ENCODE measurements at regions of chr3 and their contacts with region 1.

Region 1: GRCh38 chr3:136396916-136397315 is 146.8 kb downstream of the PCCB start:
- DNase-seq: no peak
- CTCF ChIP-seq: no peak

Region 2: GRCh38 chr3:136409549-136409948 is 12.6 kb after region 1 on chr3:
- CTCF ChIA-PET with region 1: interaction called, 14 read pairs
- POLR2A ChIA-PET with region 1: no interaction called
- DNase-seq: no peak
- CTCF ChIP-seq: no peak